Dorsolateral prefrontal cortex (tissue), 120 donors: ENCODE measurements at regions of chr19 and their contacts with region 1.

Region 1: DNA sequence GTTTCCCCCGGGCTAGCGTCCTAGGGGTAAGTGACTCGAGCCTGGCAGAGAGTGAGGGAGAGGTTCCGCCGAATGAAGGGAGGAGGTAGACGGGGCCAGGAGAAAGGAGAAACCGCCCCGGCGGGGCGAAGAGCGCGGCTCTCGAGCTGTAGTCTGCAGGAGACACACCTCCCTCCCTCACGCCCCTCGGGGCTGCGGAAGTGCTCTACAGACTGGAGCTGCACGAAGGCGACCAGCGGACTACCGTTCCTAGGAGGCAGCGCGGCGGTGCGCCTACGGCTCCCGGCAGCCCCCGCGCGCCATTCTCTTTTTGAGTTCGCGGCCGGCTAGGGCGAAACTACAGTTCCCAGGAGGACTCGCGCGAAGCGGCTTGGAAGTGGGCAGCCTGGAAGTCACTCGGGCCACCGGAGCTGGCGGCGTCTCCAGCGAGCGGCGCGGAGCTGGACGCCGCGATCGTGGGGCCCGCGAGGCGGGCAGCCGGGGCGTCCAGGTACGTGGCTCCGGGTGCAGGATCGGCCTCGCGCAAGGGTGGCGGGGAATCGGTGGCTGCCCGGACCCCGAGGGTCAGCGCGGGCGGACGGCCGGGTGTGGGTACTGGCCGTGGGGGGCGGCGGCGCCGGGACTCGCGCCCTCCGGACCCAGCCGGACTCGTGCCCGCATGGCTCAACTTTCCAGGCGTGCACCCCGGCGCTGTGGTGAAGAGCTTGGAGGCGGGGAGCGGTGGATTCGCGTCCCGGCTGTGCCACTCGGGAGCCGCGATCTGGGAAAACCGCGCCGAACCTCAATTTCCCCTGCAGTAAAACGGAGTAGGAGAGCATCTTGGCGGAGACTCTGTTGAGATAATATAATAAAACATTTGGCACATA is at the start of gene SIPA1L3:
- DNase-seq: peak; percentile 93 to 97 (median 96)
- H3K4me3 ChIP-seq: peak within 1 kb of the TSS; percentile 75 to 99 (median 94)
- H3K27ac ChIP-seq: peak within 1 kb of the TSS in 54 of 59 donors; percentile 40 to 92 (median 77)
- H3K27me3 ChIP-seq: no peaks in the 10 kb centered on the region
- CTCF ChIP-seq: peak in 44 of 56 donors; percentile 10 to 68 (median 45)
- total RNA-seq, gene SIPA1L3: 27.0 to 62.5 (median 41.4) TPM

Region 2: GRCh38 chr19:38004521-38005223 is 97.6 kb after region 1 on chr19:
- intact Hi-C with region 1: loop called (anchors 2 kb)
- DNase-seq: peak; percentile 71 to 97 (median 90)
- H3K4me3 ChIP-seq: peak overlapping the region; percentile 28 to 77 (median 61)
- H3K27ac ChIP-seq: peak overlapping the region; percentile 63 to 98 (median 93)
- H3K27me3 ChIP-seq: no peaks in the 10 kb centered on the region
- CTCF ChIP-seq: peak in 3 of 56 donors; percentile 13 to 17 (median 13)

Region 3: DNA sequence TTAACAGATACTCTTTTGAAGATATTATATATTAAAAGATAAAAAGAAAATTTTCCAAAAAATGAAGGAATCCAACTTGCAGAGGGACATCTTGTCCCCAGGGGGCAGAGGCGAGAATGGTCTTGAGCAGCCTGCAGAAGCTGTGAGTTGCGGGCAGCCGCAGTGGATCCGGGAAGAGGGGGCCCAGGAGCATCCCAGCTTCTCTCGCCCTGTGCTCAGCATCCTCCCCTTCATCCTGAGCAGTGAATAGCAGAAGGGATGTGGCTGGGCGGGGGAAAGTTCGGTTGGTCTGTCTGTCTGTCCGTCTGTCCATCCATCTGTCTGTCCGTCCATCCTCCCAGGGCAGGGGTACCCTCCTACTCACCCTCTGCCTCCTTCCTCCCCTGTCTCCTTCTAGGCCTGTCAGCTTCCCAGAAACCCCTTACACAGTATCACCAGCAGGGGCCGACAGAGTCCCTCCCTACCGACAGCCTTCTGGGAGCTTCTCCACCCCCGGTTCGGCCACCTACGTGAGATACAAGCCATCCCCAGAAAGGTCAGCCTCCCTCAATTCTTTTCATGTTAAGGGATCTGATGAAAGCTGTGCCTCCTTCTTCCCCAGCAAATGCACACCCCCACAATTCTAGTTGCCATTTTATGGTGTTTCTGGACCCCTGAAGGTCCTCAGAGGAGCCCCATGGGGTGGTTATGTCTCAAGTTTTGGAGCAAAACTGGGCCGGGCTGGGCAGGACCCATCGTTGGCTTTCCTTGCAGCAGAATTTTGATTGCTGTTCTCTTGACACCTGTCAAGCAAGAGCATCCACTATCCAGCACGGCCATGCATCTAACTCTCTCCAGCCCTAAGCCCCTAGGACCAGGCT is 235.3 kb after region 1 on chr19:
- intact Hi-C with region 1: loop called in 1 of 2 experiments (anchors 5 kb)
- DNase-seq: peak; percentile 45 to 88 (median 82)
- H3K4me3 ChIP-seq: no peak overlapping the region
- H3K27ac ChIP-seq: peak overlapping the region in 56 of 59 donors; percentile 39 to 95 (median 71)
- H3K27me3 ChIP-seq: no peaks in the 10 kb centered on the region
- CTCF ChIP-seq: peak; percentile 30 to 92 (median 79)

Region 4: GRCh38 chr19:38335949-38336637 is 429.0 kb after region 1 on chr19:
- intact Hi-C with region 1: loop called (anchors 2 to 10 kb)
- DNase-seq: peak; percentile 83 to 98 (median 94)
- H3K4me3 ChIP-seq: peak overlapping the region; percentile 57 to 91 (median 78)
- H3K27ac ChIP-seq: peak overlapping the region; percentile 72 to 99 (median 94)
- H3K27me3 ChIP-seq: no peaks in the 10 kb centered on the region
- CTCF ChIP-seq: peak in 10 of 56 donors; percentile 3 to 24 (median 13)

Region 5: DNA sequence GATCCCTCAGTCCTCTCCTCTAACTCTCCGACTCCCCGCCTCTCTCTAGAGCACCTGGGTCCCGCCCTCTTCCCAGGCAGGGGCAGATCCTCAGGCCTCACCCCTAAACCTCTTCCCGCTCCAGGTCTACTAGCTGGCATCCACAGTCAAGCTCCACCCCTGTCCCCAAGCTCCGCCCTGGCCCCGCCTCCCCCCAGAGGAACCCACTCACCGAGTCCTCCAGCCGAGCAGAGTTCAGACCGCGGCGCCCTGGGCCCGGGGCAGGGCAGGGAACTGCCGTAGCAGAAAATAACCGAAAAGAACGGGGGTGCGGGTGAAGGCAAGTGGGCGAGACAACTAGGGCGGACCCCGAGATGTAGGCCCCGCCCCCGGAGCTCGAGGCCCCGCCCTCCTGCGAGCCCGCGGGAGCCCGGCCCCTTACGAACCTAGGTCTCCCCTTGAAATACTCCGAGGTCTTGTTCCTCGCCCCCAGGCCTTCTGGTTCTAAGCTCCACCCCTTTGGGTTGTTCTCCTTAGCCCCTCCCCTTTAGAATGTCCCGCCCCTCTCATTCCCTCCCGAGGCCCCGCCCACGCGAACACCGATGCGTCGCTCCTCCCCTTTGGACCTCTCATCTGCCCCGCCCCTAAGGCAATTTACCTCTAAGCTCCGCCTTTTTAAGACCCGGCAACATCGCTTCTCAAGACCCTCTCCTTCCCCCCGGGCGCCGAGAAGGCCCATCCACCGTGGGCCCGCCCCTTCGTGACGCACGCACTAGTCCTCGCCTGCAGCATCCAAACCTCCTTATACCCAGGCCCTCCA is 480.6 kb after region 1 on chr19 and contains the start of gene GGN:
- intact Hi-C with region 1: loop called in 1 of 2 experiments (anchors 10 kb)
- DNase-seq: peak in 9 of 10 donors; percentile 61 to 89 (median 75)
- H3K4me3 ChIP-seq: peak within 1 kb of the TSS; percentile 43 to 83 (median 71)
- H3K27ac ChIP-seq: peak within 1 kb of the TSS in 56 of 59 donors; percentile 5 to 93 (median 73)
- H3K27me3 ChIP-seq: no peaks in the 10 kb centered on the region
- CTCF ChIP-seq: no peak
- total RNA-seq, gene GGN: 0.34 to 6.3 (median 1.7) TPM in 119 of 120 experiments, not detected in the other